A673 (cell line): ENCODE measurements at regions of chr18 and their contacts with region 1.

Region 1: GRCh38 chr18:50961974-50962373 is 5.9 kb upstream of the ELAC1 start:
- DNase-seq: peak; percentile 19
- H3K4me3 ChIP-seq: no peak overlapping the region
- H3K27ac ChIP-seq: no peak overlapping the region
- H3K4me1 ChIP-seq: no peaks in the 10 kb centered on the region
- H3K27me3 ChIP-seq: no peaks in the 10 kb centered on the region
- CTCF ChIP-seq: no peak

Region 2: GRCh38 chr18:50696929-50697328 is 265.0 kb before region 1 on chr18:
- CTCF ChIA-PET with region 1: no interaction called
- POLR2A ChIA-PET with region 1: interaction called, 12 read pairs
- intact Hi-C with region 1: no loop called
- DNase-seq: no peak
- H3K4me3 ChIP-seq: no peak overlapping the region
- H3K27ac ChIP-seq: no peak overlapping the region
- H3K4me1 ChIP-seq: no peaks in the 10 kb centered on the region
- H3K27me3 ChIP-seq: no peaks in the 10 kb centered on the region
- CTCF ChIP-seq: no peak